SK-N-SH (cell line): ENCODE measurements at regions of chr13 and their contacts with region 1.

Region 1: DNA sequence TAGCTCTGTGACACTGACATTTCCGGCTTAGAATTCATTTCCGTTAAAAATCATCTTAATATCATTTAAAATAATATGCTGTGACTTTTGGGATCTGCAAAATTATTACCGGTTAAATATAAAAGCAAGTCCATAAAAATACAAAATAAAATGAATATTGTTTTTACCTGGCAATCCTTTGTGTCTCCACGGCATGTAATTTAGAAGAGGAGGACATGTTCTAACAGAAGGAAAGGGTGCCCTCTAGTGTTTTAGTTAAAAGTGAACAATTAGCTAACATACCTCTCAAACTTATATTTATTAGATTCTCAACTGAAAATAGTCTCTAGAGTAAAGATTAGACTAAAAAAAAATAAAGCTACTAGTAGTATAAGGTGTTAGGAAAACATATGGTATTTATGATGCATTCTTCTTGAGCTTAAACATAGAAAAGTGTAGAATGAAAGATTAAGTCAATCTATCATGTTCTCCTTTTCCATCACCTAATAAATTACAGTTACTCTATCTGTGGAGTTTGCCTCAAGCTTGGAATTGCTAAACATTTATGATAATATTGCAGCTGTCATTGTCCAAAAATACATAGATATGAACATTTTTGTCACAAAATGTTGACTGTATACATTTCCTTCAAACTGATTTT is 676.7 kb upstream of the SPRY2 start:
- DNase-seq: peak; percentile 44
- H3K4me3 ChIP-seq: no peak overlapping the region
- H3K27ac ChIP-seq: no peak overlapping the region
- H3K4me1 ChIP-seq: peaks cover 0 to 3% of the 10 kb centered on the region in 2 experiments; a peak in 2 of 4 replicates
- H3K27me3 ChIP-seq: no peaks in the 10 kb centered on the region
- CTCF ChIP-seq: peak; percentile 81
- EP300 ChIP-seq: no peak
- RAD21 ChIP-seq: peak; percentile 85

Region 2: DNA sequence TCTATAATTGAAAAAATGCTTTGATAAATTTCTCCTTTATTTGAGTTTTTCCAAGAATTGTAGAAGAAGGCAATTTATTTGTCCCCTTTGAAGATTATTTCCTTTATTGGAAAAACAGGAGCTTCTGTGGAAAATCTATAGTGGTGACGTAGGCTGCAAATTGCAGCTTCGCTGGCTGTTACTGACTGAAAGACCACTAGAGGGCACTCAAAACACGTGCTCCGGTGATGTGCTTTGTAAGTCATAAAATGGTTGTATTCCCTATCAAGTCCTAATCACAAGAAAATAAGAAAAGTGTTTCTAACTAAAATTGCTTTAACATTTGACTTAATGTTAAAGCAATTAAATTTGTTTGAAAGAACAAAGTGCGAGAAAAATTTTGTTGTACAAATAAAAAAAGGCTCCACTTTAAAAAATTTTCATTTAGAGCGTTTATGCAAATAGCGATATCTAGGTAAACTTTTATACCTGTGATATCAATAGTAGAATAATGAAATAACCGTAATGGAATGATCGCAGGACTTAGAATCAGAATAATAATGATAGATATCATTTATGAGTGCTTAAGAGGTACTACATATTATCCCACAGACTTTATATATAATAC is 38.5 kb before region 1 on chr13:
- CTCF ChIA-PET with region 1: interaction called, 49 read pairs
- POLR2A ChIA-PET with region 1: no interaction called
- DNase-seq: peak; percentile 59
- H3K4me3 ChIP-seq: peak overlapping the region in 1 of 2 experiments; percentile 60; a peak in 1 of 4 replicates
- H3K27ac ChIP-seq: no peak overlapping the region
- H3K4me1 ChIP-seq: no peaks in the 10 kb centered on the region
- H3K27me3 ChIP-seq: no peaks in the 10 kb centered on the region
- CTCF ChIP-seq: peak; percentile 97
- EP300 ChIP-seq: no peak
- RAD21 ChIP-seq: peak; percentile 88

Region 3: GRCh38 chr13:80988391-80989151 is 29.1 kb before region 1 on chr13:
- CTCF ChIA-PET with region 1: interaction called, 11 read pairs
- POLR2A ChIA-PET with region 1: no interaction called
- DNase-seq: no peak
- H3K4me3 ChIP-seq: no peak overlapping the region
- H3K27ac ChIP-seq: no peak overlapping the region
- H3K4me1 ChIP-seq: no peaks in the 10 kb centered on the region
- H3K27me3 ChIP-seq: no peaks in the 10 kb centered on the region
- CTCF ChIP-seq: no peak
- EP300 ChIP-seq: no peak
- RAD21 ChIP-seq: no peak

Region 4: DNA sequence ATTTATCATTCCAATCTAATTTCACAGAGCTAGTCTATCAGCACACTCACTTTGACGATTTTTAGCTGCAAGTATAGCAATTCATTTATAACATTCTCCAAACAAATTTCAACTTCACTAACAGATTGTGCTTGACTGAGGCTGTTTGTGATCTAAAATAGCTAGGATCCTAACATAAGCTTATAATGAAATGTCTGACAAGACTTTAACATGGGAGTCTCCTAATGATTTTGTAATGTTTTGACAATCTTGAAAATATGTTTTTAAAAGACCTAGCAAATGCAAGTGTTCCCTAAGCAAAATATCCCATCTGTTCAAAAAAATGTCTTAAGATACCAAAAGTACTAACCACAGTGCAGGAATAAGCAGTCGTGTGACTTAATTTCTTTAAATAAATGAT is 212.8 kb after region 1 on chr13:
- CTCF ChIA-PET with region 1: no interaction called
- POLR2A ChIA-PET with region 1: no interaction called
- DNase-seq: no peak
- H3K4me3 ChIP-seq: no peak overlapping the region
- H3K27ac ChIP-seq: no peak overlapping the region
- H3K4me1 ChIP-seq: no peaks in the 10 kb centered on the region
- H3K27me3 ChIP-seq: no peaks in the 10 kb centered on the region
- CTCF ChIP-seq: no peak
- EP300 ChIP-seq: no peak
- RAD21 ChIP-seq: no peak